ENCODE measurements at regions of chr1 and their contacts with region 1.

Region 1: GRCh38 chr1:28235755-28236655 is at the start of gene ATP5IF1:
- DNase-seq: peak; percentile 91 to 99 (median 99)
- H3K4me3 ChIP-seq: peak within 1 kb of the TSS; percentile 60 to 100 (median 95)
- H3K27ac ChIP-seq: peak within 1 kb of the TSS; percentile 65 to 98 (median 93)
- H3K27me3 ChIP-seq: no peaks in the 10 kb centered on the region
- CTCF ChIP-seq: peak in 19 of 56 donors; percentile 7 to 48 (median 20)
- total RNA-seq, gene ATP5IF1: 83.1 to 262 (median 175) TPM

Region 2: GRCh38 chr1:28248283-28249012 is 12.4 kb after region 1 on chr1:
- intact Hi-C with region 1: loop called in 1 of 2 experiments (anchors 1 kb)
- DNase-seq: peak; percentile 69 to 89 (median 78)
- H3K4me3 ChIP-seq: peak overlapping the region in 51 of 59 donors; percentile 7 to 82 (median 33)
- H3K27ac ChIP-seq: peak overlapping the region; percentile 6 to 96 (median 85)
- H3K27me3 ChIP-seq: no peaks in the 10 kb centered on the region
- CTCF ChIP-seq: peak; percentile 83 to 97 (median 94)